Stomach (tissue), 19 donors: ENCODE measurements at regions of chr15 and their contacts with region 1.

Region 1: GRCh38 chr15:94163999-94164807 is 67.2 kb upstream of the MCTP2 start:
- DNase-seq: peak; percentile 63 to 85
- H3K4me3 ChIP-seq: no peak overlapping the region
- H3K27ac ChIP-seq: no peak overlapping the region
- H3K4me1 ChIP-seq: no peaks in the 10 kb centered on the region
- H3K27me3 ChIP-seq: no peaks in the 10 kb centered on the region
- CTCF ChIP-seq: peak in 5 of 7 experiments; percentile 59 to 87 (median 82)
- EP300 ChIP-seq: no peak
- POLR2A ChIP-seq: no peak

Region 2: DNA sequence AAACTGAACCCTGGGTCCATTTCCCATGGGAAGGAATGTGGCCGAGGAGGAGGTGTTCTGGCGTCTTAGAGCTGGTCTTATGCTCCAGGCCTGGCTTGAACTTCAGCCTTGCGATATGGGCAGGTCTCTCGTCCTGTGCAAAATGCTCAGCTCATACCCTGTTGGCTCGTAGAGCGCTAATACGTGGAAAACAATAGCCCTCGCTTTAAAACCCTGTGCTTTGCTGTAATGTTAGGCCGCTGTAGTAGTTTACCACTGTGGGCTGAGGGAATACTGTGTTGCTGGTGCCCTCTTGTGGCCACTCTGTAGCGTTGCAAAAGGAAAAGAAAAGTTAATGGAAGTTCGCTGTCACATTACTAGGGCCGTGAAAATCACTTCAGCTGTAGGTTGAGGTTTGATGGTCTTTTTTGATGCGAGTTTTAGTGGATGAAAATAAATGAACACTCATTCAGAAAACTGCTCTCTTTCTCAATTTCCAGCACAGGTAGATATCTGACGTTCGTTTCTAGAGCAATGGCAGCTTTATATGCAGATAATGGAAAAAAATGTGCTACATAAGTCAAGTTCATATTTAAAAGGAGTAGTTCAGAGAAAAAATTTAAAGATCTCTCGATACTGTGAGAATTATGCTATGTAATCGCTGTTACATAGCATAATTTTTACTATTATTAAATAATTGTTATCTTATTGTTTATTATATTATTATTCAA is 160.1 kb after region 1 on chr15:
- intact Hi-C with region 1: loop called (anchors 5 kb)
- DNase-seq: peak; percentile 53 to 89
- H3K4me3 ChIP-seq: no peak overlapping the region
- H3K27ac ChIP-seq: no peak overlapping the region
- H3K4me1 ChIP-seq: peaks cover 6 to 28% (median 9%) of the 10 kb centered on the region in 4 donors
- H3K27me3 ChIP-seq: no peaks in the 10 kb centered on the region
- CTCF ChIP-seq: peak in 5 of 7 experiments; percentile 79 to 95 (median 88)
- EP300 ChIP-seq: no peak
- POLR2A ChIP-seq: no peak

Region 3: GRCh38 chr15:94412979-94413746 is 249.0 kb after region 1 on chr15:
- intact Hi-C with region 1: no loop called
- DNase-seq: peak in 1 of 2 donors; percentile 65
- H3K4me3 ChIP-seq: no peak overlapping the region
- H3K27ac ChIP-seq: no peak overlapping the region
- H3K4me1 ChIP-seq: peaks cover 0 to 34% (median 13%) of the 10 kb centered on the region in 4 donors
- H3K27me3 ChIP-seq: no peaks in the 10 kb centered on the region
- CTCF ChIP-seq: no peak
- EP300 ChIP-seq: no peak
- POLR2A ChIP-seq: no peak